ENCODE measurements at regions of chr19 and their contacts with region 1.

Region 1: GRCh38 chr19:17902701-17903100 is 30.1 kb upstream of the CCDC124 start:
- DNase-seq: no peak
- H3K4me3 ChIP-seq: no peak overlapping the region
- H3K27ac ChIP-seq: no peak overlapping the region
- H3K4me1 ChIP-seq: peaks cover 4% of the 10 kb centered on the region; the same call in 1 of the 2 replicates
- H3K27me3 ChIP-seq: peaks cover 21% of the 10 kb centered on the region; the same call in 1 of the 2 replicates
- CTCF ChIP-seq: no peak

Region 2: DNA sequence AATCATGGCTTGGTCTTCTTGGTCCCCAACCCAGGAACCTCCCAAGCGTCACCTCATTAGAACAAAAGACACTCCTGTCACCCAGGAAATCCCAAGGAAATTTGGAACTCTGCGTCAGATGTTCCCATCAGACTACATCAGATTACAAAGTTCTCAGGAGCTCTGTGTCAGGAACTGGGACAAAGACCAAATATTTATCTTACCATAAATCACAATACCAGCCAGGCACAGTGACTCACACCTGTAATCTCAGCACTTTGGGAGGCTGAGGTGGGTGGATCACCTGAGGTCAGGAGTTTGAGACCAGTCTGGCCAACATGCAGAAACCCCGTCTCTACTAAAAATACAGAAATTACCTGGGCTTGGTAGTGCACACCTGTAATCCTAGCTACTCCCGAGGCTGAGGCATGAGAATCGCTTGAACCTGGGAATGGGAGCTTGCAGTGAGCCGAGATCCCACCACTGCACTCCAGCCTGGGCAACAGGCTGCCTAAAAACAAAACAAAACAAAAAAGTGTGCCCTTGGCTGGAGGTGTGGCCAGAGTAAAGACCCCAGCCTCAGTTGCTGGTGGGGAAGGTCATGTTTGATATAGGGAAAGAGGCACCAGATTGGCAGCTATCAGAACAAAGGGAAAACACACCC is 13.4 kb after region 1 on chr19:
- CTCF ChIA-PET with region 1: no interaction called
- POLR2A ChIA-PET with region 1: interaction called, 11 read pairs
- intact Hi-C with region 1: no loop called
- DNase-seq: peak; percentile 45 to 93
- H3K4me3 ChIP-seq: no peak overlapping the region
- H3K27ac ChIP-seq: peak overlapping the region; percentile 68
- H3K4me1 ChIP-seq: peaks cover 17% of the 10 kb centered on the region
- H3K27me3 ChIP-seq: no peaks in the 10 kb centered on the region
- CTCF ChIP-seq: no peak